Sigmoid colon (tissue), 7 donors: ENCODE measurements at regions of chr13 and their contacts with region 1.

Region 1: DNA sequence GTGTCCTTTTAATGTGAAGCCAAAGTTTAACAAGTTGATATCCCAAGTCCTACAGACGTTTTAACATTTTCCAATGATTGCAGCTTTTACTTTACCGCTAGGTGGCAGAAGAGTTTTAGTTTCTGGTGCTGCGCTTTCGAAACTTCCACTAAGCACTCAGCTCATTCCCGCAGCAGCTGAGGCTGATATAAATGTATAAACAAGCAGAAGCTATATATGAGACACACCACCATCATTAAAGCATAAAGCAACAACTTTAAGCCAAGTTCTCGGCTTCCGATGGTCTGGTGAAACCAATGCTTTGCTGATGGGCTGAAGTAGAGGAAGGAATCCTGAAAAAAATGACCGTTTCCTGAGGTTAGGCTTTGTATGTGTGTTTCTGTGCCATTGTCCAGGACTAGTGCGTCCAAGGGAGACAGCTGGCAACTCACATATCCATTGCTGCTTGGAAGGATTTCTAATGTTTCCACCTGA is 753.9 kb downstream of the OLFM4 start:
- DNase-seq: no peak
- H3K4me3 ChIP-seq: peak overlapping the region in 3 of 4 donors; percentile 14 to 35 (median 32)
- H3K27ac ChIP-seq: no peak overlapping the region
- H3K4me1 ChIP-seq: peaks cover 0 to 5% (median 2%) of the 10 kb centered on the region in 4 donors
- H3K27me3 ChIP-seq: no peaks in the 10 kb centered on the region
- CTCF ChIP-seq: peak; percentile 17 to 72 (median 52)
- EP300 ChIP-seq: no peak
- POLR2A ChIP-seq: no peak

Region 2: GRCh38 chr13:53250266-53250875 is 532.2 kb before region 1 on chr13:
- intact Hi-C with region 1: loop called (anchors 5 kb)
- DNase-seq: no peak
- H3K4me3 ChIP-seq: no peak overlapping the region
- H3K27ac ChIP-seq: no peak overlapping the region
- H3K4me1 ChIP-seq: no peaks in the 10 kb centered on the region
- H3K27me3 ChIP-seq: no peaks in the 10 kb centered on the region
- CTCF ChIP-seq: peak; percentile 34 to 75 (median 72)
- EP300 ChIP-seq: no peak
- POLR2A ChIP-seq: no peak

Region 3: GRCh38 chr13:53743906-53744305 is 38.6 kb before region 1 on chr13:
- intact Hi-C with region 1: no loop called
- DNase-seq: no peak
- H3K4me3 ChIP-seq: no peak overlapping the region
- H3K27ac ChIP-seq: no peak overlapping the region
- H3K4me1 ChIP-seq: no peaks in the 10 kb centered on the region
- H3K27me3 ChIP-seq: no peaks in the 10 kb centered on the region
- CTCF ChIP-seq: no peak
- EP300 ChIP-seq: no peak
- POLR2A ChIP-seq: no peak

Region 4: DNA sequence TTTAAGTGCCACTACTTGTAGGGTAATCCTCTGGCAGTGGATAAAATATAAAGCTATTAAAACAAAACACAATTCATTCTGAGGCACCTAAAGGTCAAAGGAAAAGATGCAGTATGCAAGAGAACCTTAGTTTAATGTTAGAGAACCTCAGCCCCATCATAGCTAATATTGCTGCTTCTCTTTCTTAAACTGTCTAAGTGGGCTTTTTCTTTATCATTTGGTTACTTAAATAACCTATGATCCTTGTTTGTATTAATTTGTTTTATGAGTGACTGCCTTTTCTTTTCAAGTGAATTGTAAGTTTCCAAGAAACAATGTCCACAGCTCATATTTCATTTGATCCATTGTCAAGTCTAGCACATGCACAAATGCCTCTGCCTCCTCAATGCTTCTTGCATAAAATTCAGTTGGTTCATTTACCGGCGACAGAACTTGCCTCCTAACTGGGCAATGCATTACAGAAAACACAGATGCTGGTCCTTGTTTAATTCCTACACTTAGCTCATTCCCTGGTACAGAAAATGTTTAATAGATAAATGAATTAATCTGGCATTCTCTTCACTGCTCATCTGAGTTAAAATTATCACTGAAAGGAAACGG is 295.8 kb after region 1 on chr13:
- intact Hi-C with region 1: no loop called
- DNase-seq: no peak
- H3K4me3 ChIP-seq: no peak overlapping the region
- H3K27ac ChIP-seq: no peak overlapping the region
- H3K4me1 ChIP-seq: no peaks in the 10 kb centered on the region
- H3K27me3 ChIP-seq: no peaks in the 10 kb centered on the region
- CTCF ChIP-seq: no peak
- EP300 ChIP-seq: no peak
- POLR2A ChIP-seq: no peak